Ovary (tissue), 10 donors: ENCODE measurements at regions of chr3 and their contacts with region 1.

Region 1: GRCh38 chr3:36741285-36741684 is 23.1 kb downstream of the DCLK3 start:
- DNase-seq: no peak
- H3K4me3 ChIP-seq: no peak overlapping the region
- H3K27ac ChIP-seq: no peak overlapping the region
- H3K4me1 ChIP-seq: no peaks in the 10 kb centered on the region
- H3K27me3 ChIP-seq: no peaks in the 10 kb centered on the region
- CTCF ChIP-seq: no peak
- EP300 ChIP-seq: no peak
- POLR2A ChIP-seq: no peak

Region 2: DNA sequence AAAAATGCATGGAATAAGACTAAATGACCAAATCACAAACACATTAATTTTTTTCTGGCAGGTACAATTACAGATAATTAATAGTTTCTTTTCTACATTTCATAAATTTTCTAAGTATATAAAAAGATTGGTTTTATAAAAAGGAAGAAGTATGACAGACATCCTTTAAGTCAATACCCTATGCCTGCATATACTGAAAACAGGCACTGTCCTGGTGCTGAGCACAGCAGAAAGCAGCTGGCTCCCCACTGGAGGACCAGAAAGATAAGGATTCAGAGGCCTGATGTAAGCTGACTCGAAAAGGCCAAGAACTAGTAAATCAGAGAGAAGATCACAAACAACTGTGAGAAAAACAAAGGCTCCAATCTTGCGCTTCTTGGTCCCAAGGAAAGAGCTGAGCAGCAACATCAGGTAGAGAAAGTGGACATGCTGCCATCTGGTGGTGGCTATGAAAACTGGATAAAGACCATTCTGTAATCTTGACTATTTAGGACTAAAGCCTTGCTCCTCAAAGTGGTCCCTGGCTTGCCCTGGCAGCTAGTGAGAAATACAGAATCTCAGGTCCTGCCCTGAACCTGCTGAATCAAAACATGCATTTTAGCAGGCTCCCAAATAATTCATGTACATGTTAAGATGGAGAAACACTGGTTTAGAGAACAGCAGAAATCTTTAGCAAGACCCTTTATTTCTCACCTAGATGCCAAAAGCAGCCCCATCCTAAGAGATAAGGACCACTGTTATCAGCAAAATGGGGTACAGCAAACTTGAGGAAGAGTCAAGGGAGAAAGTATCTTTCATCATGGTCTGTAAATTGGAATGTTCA is 127.5 kb after region 1 on chr3:
- intact Hi-C with region 1: loop called in 2 of 4 experiments (anchors 10 kb)
- DNase-seq: peak in 4 of 5 donors; percentile 22 to 58 (median 42)
- H3K4me3 ChIP-seq: no peak overlapping the region
- H3K27ac ChIP-seq: no peak overlapping the region
- H3K4me1 ChIP-seq: peaks cover 1% of the 10 kb centered on the region
- H3K27me3 ChIP-seq: no peaks in the 10 kb centered on the region
- CTCF ChIP-seq: peak in 2 of 3 donors; percentile 51 to 57
- EP300 ChIP-seq: no peak
- POLR2A ChIP-seq: no peak

Region 3: GRCh38 chr3:36957862-36958686 is 216.8 kb after region 1 on chr3:
- intact Hi-C with region 1: loop called in 3 of 4 experiments (anchors 5 to 10 kb)
- DNase-seq: no peak
- H3K4me3 ChIP-seq: peak overlapping the region; percentile 12
- H3K27ac ChIP-seq: no peak overlapping the region
- H3K4me1 ChIP-seq: no peaks in the 10 kb centered on the region
- H3K27me3 ChIP-seq: no peaks in the 10 kb centered on the region
- CTCF ChIP-seq: no peak
- EP300 ChIP-seq: no peak
- POLR2A ChIP-seq: no peak